Dorsolateral prefrontal cortex (tissue), 120 donors: ENCODE measurements at regions of chr6 and their contacts with region 1.

Region 1: GRCh38 chr6:66289889-66290288 is 582.9 kb upstream of the EYS start:
- DNase-seq: no peak
- H3K4me3 ChIP-seq: no peak overlapping the region
- H3K27ac ChIP-seq: no peak overlapping the region
- H3K27me3 ChIP-seq: no peaks in the 10 kb centered on the region
- CTCF ChIP-seq: no peak

Region 2: GRCh38 chr6:66344796-66345195 is 54.9 kb after region 1 on chr6:
- intact Hi-C with region 1: loop called in 1 of 2 experiments (anchors 5 kb)
- DNase-seq: no peak
- H3K4me3 ChIP-seq: no peak overlapping the region
- H3K27ac ChIP-seq: peak overlapping the region in 3 of 59 donors; percentile 25 to 39 (median 38)
- H3K27me3 ChIP-seq: no peaks in the 10 kb centered on the region
- CTCF ChIP-seq: no peak